B cell (primary cell): ENCODE measurements at regions of chr17 and their contacts with region 1.

Region 1: GRCh38 chr17:55717898-55718735 is 4.5 kb downstream of the TMEM100 start:
- DNase-seq: peak; percentile 74
- ATAC-seq: no peak
- H3K4me3 ChIP-seq: no peak overlapping the region
- H3K4me3 Mint-ChIP-seq: no peak overlapping the region
- H3K27ac ChIP-seq: no peak overlapping the region
- H3K27ac Mint-ChIP-seq: no peak overlapping the region
- H3K4me1 ChIP-seq: no peaks in the 10 kb centered on the region
- H3K4me1 Mint-ChIP-seq: no peaks in the 10 kb centered on the region
- H3K27me3 ChIP-seq: peaks cover 0 to 7% (median 1%) of the 10 kb centered on the region in 4 experiments
- H3K27me3 Mint-ChIP-seq: peaks cover 27% of the 10 kb centered on the region
- CTCF ChIP-seq: peak; percentile 92

Region 2: DNA sequence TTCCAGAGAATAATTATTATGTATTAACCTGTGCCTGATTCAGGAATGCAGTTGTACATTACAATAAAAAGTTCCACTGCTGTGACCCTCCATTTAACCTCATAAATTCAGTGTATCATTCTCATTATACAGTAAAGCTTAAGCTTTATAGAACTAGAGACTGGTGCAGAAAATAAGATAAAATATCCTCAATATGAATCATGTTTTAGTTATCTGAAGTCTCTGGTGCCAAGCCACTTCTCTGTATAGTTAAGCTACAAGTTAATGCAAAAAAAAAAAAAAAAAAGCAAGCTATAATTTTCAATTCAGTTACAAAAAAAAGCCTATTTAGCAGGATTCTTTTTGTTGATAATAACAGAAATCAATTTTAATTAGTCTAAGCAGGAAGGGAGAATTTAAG is 184.5 kb before region 1 on chr17:
- CTCF ChIA-PET with region 1: interaction called, 166 read pairs
- POLR2A ChIA-PET with region 1: no interaction called
- intact Hi-C with region 1: no loop called
- DNase-seq: no peak
- ATAC-seq: no peak
- H3K4me3 ChIP-seq: no peak overlapping the region
- H3K4me3 Mint-ChIP-seq: no peak overlapping the region
- H3K27ac ChIP-seq: no peak overlapping the region
- H3K27ac Mint-ChIP-seq: no peak overlapping the region
- H3K4me1 ChIP-seq: no peaks in the 10 kb centered on the region
- H3K4me1 Mint-ChIP-seq: no peaks in the 10 kb centered on the region
- H3K27me3 ChIP-seq: no peaks in the 10 kb centered on the region
- H3K27me3 Mint-ChIP-seq: peaks cover 1% of the 10 kb centered on the region
- CTCF ChIP-seq: no peak

Region 3: DNA sequence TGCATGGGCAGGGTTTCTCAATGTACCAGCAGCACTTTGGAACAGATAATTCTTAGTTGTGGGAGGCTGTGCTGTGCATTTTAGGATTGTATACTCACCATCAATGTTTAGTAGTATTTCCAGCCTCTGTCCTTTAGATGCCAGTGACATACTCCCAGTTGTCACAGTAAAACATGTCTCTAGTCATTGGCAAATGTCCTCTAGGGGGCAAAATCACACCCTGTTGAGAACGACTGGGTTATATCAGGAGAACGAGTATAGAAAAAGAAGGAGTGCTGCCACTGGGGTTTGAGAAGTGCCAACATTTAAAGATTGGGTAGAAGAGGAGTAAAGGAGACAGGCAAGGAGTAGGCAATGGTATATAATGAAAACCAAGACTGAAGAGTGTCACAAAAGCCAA is 169.0 kb before region 1 on chr17:
- CTCF ChIA-PET with region 1: interaction called, 5 read pairs
- POLR2A ChIA-PET with region 1: no interaction called
- intact Hi-C with region 1: loop called (anchors 5 kb)
- DNase-seq: peak; percentile 23
- ATAC-seq: no peak
- H3K4me3 ChIP-seq: no peak overlapping the region
- H3K4me3 Mint-ChIP-seq: no peak overlapping the region
- H3K27ac ChIP-seq: no peak overlapping the region
- H3K27ac Mint-ChIP-seq: no peak overlapping the region
- H3K4me1 ChIP-seq: no peaks in the 10 kb centered on the region
- H3K4me1 Mint-ChIP-seq: no peaks in the 10 kb centered on the region
- H3K27me3 ChIP-seq: no peaks in the 10 kb centered on the region
- H3K27me3 Mint-ChIP-seq: peaks cover 12% of the 10 kb centered on the region
- CTCF ChIP-seq: peak; percentile 21

Region 4: GRCh38 chr17:55601874-55602364 is 116.2 kb before region 1 on chr17:
- CTCF ChIA-PET with region 1: interaction called, 14 read pairs
- POLR2A ChIA-PET with region 1: no interaction called
- intact Hi-C with region 1: no loop called
- DNase-seq: peak; percentile 56
- ATAC-seq: no peak
- H3K4me3 ChIP-seq: no peak overlapping the region
- H3K4me3 Mint-ChIP-seq: no peak overlapping the region
- H3K27ac ChIP-seq: no peak overlapping the region
- H3K27ac Mint-ChIP-seq: no peak overlapping the region
- H3K4me1 ChIP-seq: no peaks in the 10 kb centered on the region
- H3K4me1 Mint-ChIP-seq: no peaks in the 10 kb centered on the region
- H3K27me3 ChIP-seq: peaks cover 0 to 4% (median 0%) of the 10 kb centered on the region in 4 experiments
- H3K27me3 Mint-ChIP-seq: peaks cover 9% of the 10 kb centered on the region
- CTCF ChIP-seq: peak; percentile 69

Region 5: DNA sequence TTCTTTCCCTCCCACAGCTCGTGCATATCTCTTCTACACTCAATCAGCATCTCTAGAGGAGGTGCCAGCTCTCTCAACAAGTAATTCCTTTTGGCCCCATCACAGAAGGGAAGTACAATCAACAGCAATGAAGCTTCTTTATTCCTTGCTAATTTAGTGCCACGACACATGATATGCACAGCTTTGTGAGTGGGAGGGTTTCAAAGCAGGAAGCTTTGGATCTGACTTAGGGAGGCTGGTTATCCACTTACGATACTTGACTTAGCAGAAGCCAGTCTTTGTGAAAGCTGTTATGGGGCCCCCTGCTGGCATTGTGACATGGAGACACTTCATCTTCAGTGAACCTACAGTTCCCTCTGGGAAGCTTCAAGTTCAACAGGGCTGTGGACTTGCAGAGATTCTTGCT is 76.4 kb before region 1 on chr17:
- CTCF ChIA-PET with region 1: interaction called, 12 read pairs
- POLR2A ChIA-PET with region 1: no interaction called
- intact Hi-C with region 1: no loop called
- DNase-seq: peak; percentile 34
- ATAC-seq: no peak
- H3K4me3 ChIP-seq: no peak overlapping the region
- H3K4me3 Mint-ChIP-seq: no peak overlapping the region
- H3K27ac ChIP-seq: no peak overlapping the region
- H3K27ac Mint-ChIP-seq: no peak overlapping the region
- H3K4me1 ChIP-seq: no peaks in the 10 kb centered on the region
- H3K4me1 Mint-ChIP-seq: peaks cover 4% of the 10 kb centered on the region
- H3K27me3 ChIP-seq: peaks cover 0 to 4% (median 2%) of the 10 kb centered on the region in 4 experiments
- H3K27me3 Mint-ChIP-seq: peaks cover 7% of the 10 kb centered on the region
- CTCF ChIP-seq: peak; percentile 61

Region 6: DNA sequence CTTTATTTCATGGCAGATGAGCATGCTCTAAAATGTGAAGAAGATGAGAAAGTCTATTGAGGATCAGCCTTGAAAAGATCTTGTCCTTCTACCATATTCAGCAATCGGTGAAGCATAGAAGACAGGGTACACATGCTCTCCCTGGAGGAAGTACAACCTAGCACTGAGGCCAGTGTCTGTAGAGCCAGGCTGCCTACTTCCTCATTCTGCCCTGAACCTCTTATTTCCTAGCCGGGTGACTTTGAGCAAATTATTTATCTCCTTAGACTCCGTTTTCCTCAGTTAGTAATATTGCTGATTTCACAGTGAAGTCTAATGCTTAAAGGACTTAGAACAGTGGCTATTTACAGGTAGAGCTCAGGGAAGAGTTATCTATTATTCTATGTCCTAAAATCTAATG is 53.8 kb before region 1 on chr17:
- CTCF ChIA-PET with region 1: no interaction called
- POLR2A ChIA-PET with region 1: no interaction called
- intact Hi-C with region 1: no loop called
- DNase-seq: peak; percentile 73
- ATAC-seq: peak; percentile 100
- H3K4me3 ChIP-seq: no peak overlapping the region
- H3K4me3 Mint-ChIP-seq: peak overlapping the region; percentile 2
- H3K27ac ChIP-seq: peak overlapping the region in 1 of 2 donors; percentile 1
- H3K27ac Mint-ChIP-seq: peak overlapping the region; percentile 12
- H3K4me1 ChIP-seq: peaks cover 17 to 37% of the 10 kb centered on the region in 2 donors
- H3K4me1 Mint-ChIP-seq: peaks cover 50% of the 10 kb centered on the region
- H3K27me3 ChIP-seq: peaks cover 0 to 6% (median 2%) of the 10 kb centered on the region in 4 experiments
- H3K27me3 Mint-ChIP-seq: no peaks in the 10 kb centered on the region
- CTCF ChIP-seq: no peak

Region 7: GRCh38 chr17:55706808-55707807 is 11.0 kb before region 1 on chr17:
- CTCF ChIA-PET with region 1: interaction called, 13 read pairs
- POLR2A ChIA-PET with region 1: no interaction called
- intact Hi-C with region 1: no loop called
- DNase-seq: no peak
- ATAC-seq: no peak
- H3K4me3 ChIP-seq: no peak overlapping the region
- H3K4me3 Mint-ChIP-seq: no peak overlapping the region
- H3K27ac ChIP-seq: no peak overlapping the region
- H3K27ac Mint-ChIP-seq: no peak overlapping the region
- H3K4me1 ChIP-seq: no peaks in the 10 kb centered on the region
- H3K4me1 Mint-ChIP-seq: no peaks in the 10 kb centered on the region
- H3K27me3 ChIP-seq: no peaks in the 10 kb centered on the region
- H3K27me3 Mint-ChIP-seq: peaks cover 39% of the 10 kb centered on the region
- CTCF ChIP-seq: no peak

Region 8: GRCh38 chr17:55735731-55736405 is 17.8 kb after region 1 on chr17:
- CTCF ChIA-PET with region 1: interaction called, 10 read pairs
- POLR2A ChIA-PET with region 1: no interaction called
- intact Hi-C with region 1: no loop called
- DNase-seq: peak; percentile 54
- ATAC-seq: peak; percentile 60
- H3K4me3 ChIP-seq: no peak overlapping the region
- H3K4me3 Mint-ChIP-seq: no peak overlapping the region
- H3K27ac ChIP-seq: no peak overlapping the region
- H3K27ac Mint-ChIP-seq: no peak overlapping the region
- H3K4me1 ChIP-seq: peaks cover 6% of the 10 kb centered on the region in 2 donors
- H3K4me1 Mint-ChIP-seq: peaks cover 7% of the 10 kb centered on the region
- H3K27me3 ChIP-seq: peaks cover 0 to 3% (median 0%) of the 10 kb centered on the region in 4 experiments
- H3K27me3 Mint-ChIP-seq: peaks cover 33% of the 10 kb centered on the region
- CTCF ChIP-seq: peak; percentile 79